ENCODE measurements at regions of chr14 and their contacts with region 1.

Region 1: GRCh38 chr14:69648477-69649451 is 37.4 kb downstream of the SUSD6 start:
- DNase-seq: no peak

Region 2: GRCh38 chr14:69611201-69612011 is 37.4 kb before region 1 on chr14 and contains the start of gene SUSD6:
- intact Hi-C with region 1: loop called (anchors 5 kb)
- DNase-seq: peak; percentile 97
- total RNA-seq, gene SUSD6: 26.9 TPM

Region 3: GRCh38 chr14:69635981-69636639 is 12.7 kb before region 1 on chr14:
- intact Hi-C with region 1: loop called (anchors 2 kb)
- DNase-seq: no peak